HepG2 (cell line): ENCODE measurements at regions of chr21 and their contacts with region 1.

Region 1: DNA sequence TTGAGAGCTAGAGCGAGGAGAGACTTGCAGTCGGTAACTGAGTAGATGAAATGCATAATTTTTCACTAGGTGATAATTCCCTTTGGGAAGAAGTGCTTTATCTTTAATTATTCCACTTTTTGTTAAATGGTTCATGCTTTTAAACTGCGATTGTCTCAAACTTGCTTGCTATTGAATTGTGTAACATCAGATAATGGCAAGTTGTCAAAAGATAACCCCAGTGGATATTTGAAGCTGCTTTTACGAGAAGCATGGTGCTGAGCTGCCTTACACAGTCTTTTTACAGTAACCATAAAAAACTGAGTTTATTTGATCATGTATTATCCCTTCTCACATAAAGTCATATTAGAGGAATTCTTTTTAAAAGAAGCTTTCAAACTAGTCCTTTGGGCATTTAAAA is 30.2 kb downstream of the TMEM50B start:
- DNase-seq: no peak
- ATAC-seq: no peak
- H3K4me3 ChIP-seq: no peak overlapping the region
- H3K27ac ChIP-seq: no peak overlapping the region
- H3K4me1 ChIP-seq: peaks cover 14% of the 10 kb centered on the region
- H3K27me3 ChIP-seq: no peaks in the 10 kb centered on the region
- CTCF ChIP-seq: no peak
- EP300 ChIP-seq: no peak
- POLR2A ChIP-seq: no peak
- RAD21 ChIP-seq: no peak

Region 2: GRCh38 chr21:33212159-33212851 is 237.3 kb before region 1 on chr21:
- CTCF ChIA-PET with region 1: no interaction called
- POLR2A ChIA-PET with region 1: no interaction called
- in situ Hi-C with region 1: no loop called
- intact Hi-C with region 1: no loop called
- DNase-seq: no peak
- ATAC-seq: peak; percentile 67
- H3K4me3 ChIP-seq: peak overlapping the region in 2 of 3 experiments; percentile 41 to 49; a peak in 3 of 6 replicates
- H3K27ac ChIP-seq: peak overlapping the region; percentile 24
- H3K4me1 ChIP-seq: peaks cover 62% of the 10 kb centered on the region
- H3K27me3 ChIP-seq: no peaks in the 10 kb centered on the region
- CTCF ChIP-seq: no peak
- EP300 ChIP-seq: peak in 1 of 2 experiments; percentile 28; a peak in 1 of 4 replicates
- POLR2A ChIP-seq: no peak
- RAD21 ChIP-seq: no peak

Region 3: GRCh38 chr21:33608559-33608958 is 158.9 kb after region 1 on chr21:
- CTCF ChIA-PET with region 1: no interaction called
- POLR2A ChIA-PET with region 1: no interaction called
- in situ Hi-C with region 1: no loop called
- intact Hi-C with region 1: loop called (anchors 5 kb)
- DNase-seq: no peak
- ATAC-seq: no peak
- H3K4me3 ChIP-seq: no peak overlapping the region
- H3K27ac ChIP-seq: no peak overlapping the region
- H3K4me1 ChIP-seq: no peaks in the 10 kb centered on the region
- H3K27me3 ChIP-seq: no peaks in the 10 kb centered on the region
- CTCF ChIP-seq: no peak
- EP300 ChIP-seq: no peak
- POLR2A ChIP-seq: no peak
- RAD21 ChIP-seq: no peak